ENCODE measurements at regions of chr3 and their contacts with region 1.

Region 1: DNA sequence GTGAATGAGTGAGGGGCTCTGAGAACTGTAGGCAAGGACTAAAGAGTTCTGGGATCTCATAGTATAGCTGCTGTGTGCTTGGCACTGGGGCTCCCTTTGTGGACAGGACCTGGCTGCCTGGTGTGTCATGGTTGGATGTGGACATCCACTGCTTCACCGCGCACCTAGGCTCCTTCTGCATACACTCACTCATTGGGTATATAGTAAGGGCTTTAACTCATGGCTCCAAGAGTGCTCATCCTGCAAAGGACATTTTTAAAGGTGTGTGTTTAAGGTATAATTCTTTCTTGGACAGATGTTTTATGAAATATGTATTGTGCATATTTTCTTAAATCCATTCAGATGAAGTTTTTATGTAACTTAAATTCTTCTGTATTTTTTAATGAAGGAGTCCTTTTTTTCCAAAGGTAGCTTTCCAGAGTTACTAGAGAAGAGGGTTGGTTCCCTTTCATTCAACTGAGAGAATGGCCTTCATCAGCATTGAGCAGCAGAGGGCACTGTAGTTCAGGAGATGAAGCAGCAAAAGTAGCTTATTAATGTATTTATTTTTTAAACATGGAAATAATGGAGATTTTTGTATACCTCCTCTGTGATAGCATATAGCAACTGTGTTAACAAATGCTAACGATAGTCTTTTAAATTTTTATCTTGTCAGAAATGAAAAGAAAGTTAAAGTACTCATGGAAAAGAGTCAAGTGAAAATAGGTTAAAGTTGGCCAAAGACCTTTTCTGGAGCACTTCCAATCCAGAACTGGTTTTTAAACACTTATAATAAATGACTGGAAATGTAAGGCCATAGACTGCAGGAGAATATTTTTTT is 25.2 kb downstream of the OXNAD1 start:
- DNase-seq: peak; percentile 39
- CTCF ChIP-seq: peak; percentile 88

Region 2: GRCh38 chr3:16216373-16216940 is 73.8 kb before region 1 on chr3:
- CTCF ChIA-PET with region 1: no interaction called
- POLR2A ChIA-PET with region 1: no interaction called
- DNase-seq: no peak
- CTCF ChIP-seq: no peak

Region 3: GRCh38 chr3:16273867-16274266 is 16.4 kb before region 1 on chr3:
- CTCF ChIA-PET with region 1: interaction called, 55 read pairs
- POLR2A ChIA-PET with region 1: no interaction called
- DNase-seq: no peak
- CTCF ChIP-seq: no peak

Region 4: DNA sequence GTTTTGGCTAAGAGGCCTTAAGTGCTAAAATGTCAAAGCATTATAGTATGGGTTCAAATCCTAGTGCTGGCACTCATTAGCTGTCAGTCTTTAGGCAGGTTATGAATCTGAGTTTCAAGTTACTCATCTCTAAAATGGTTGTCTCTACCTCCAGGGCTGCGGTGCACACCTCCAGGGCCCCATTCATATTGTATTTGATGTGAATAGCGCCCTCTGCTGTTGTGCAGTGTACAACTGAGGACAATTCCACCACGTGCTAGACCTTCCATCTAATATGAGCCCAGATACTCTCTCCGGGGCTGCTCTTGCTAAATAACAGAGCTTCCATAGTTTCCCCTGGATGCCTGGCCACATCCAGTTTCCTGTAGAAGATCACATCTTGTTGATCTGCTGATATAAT is 29.1 kb after region 1 on chr3:
- CTCF ChIA-PET with region 1: interaction called, 13 read pairs
- POLR2A ChIA-PET with region 1: no interaction called
- DNase-seq: peak; percentile 38
- CTCF ChIP-seq: peak; percentile 29

Region 5: GRCh38 chr3:16504242-16504641 is 214.0 kb after region 1 on chr3:
- CTCF ChIA-PET with region 1: interaction called, 24 read pairs
- POLR2A ChIA-PET with region 1: no interaction called
- DNase-seq: peak; percentile 63
- CTCF ChIP-seq: no peak

Measured in GM10248 (cell line).